CD4-positive, alpha-beta T cell (primary cell): ENCODE measurements at regions of chr13 and their contacts with region 1.

Region 1: GRCh38 chr13:75760131-75761021 is 124.2 kb downstream of the LMO7 start:
- DNase-seq: peak in 6 of 14 experiments; percentile 7 to 56 (median 44)
- ATAC-seq: peak; percentile 73
- H3K4me3 ChIP-seq: peak overlapping the region; percentile 38
- H3K4me3 Mint-ChIP-seq: peak overlapping the region; percentile 91
- H3K27ac ChIP-seq: peak overlapping the region in 1 of 2 donors; percentile 8
- H3K27ac Mint-ChIP-seq: peak overlapping the region; percentile 91
- H3K4me1 ChIP-seq: peaks cover 19% of the 10 kb centered on the region
- H3K4me1 Mint-ChIP-seq: peaks cover 70% of the 10 kb centered on the region
- H3K27me3 ChIP-seq: no peaks in the 10 kb centered on the region
- H3K27me3 Mint-ChIP-seq: no peaks in the 10 kb centered on the region
- CTCF ChIP-seq: peak; percentile 37

Region 2: DNA sequence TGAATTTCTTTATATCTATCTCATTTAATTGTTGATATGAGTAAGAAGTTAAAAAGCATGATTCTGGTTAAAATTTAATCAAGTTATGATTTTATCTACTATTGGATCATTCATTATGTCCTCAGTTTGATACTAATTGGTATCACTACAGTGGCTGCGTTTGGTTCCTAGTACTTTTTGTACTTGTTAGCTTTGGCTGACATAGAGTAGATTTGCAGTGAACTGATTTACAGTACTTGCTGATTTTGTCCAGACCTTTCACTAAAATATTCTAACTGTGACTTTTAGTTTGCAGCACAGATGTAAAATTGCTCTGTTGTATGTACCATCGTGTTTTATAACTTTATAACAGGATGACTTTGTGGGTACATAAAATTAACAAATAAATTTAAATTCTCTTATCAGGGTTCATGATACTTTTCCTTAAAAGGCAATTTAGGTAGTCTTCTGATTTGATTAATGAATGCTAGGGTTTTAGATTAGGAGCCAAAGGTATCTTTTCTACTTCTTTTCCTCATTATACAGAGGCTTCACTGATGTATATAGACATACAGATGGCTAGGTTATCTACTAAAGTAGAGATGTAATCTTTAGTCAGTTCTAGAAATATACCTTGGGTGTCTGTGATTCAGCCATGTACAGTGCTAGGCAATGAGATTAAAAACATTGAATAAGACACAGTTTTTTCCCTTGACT is 202.1 kb before region 1 on chr13:
- CTCF ChIA-PET with region 1: no interaction called
- POLR2A ChIA-PET with region 1: no interaction called
- intact Hi-C with region 1: no loop called
- DNase-seq: no peak
- ATAC-seq: peak; percentile 48
- H3K4me3 ChIP-seq: no peak overlapping the region
- H3K4me3 Mint-ChIP-seq: peak overlapping the region; percentile 23
- H3K27ac ChIP-seq: no peak overlapping the region
- H3K27ac Mint-ChIP-seq: peak overlapping the region; percentile 38
- H3K4me1 ChIP-seq: peaks cover 4% of the 10 kb centered on the region
- H3K4me1 Mint-ChIP-seq: peaks cover 52% of the 10 kb centered on the region
- H3K27me3 ChIP-seq: no peaks in the 10 kb centered on the region
- H3K27me3 Mint-ChIP-seq: no peaks in the 10 kb centered on the region
- CTCF ChIP-seq: no peak

Region 3: DNA sequence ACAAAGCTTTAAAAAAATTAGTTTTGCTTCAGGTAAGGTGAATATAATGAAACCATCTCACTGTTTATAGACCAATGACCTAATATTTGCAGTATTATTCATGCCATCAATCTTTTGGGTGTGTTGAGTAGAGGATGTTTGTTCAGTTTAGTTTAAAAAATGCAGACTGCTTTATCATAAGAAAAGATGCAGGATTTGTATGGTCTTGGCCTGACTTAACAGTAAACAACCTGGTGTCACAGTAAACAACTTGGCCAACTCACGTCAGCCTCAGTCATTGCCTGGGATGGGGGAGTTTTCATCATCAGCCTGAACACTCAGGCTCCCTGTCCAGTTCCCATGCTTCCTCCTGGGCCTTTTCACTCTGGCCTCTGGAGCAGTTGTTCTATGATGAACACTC is 69.2 kb before region 1 on chr13:
- CTCF ChIA-PET with region 1: interaction called, 5 read pairs
- POLR2A ChIA-PET with region 1: interaction called, 19 read pairs
- intact Hi-C with region 1: loop called in 1 of 2 experiments (anchors 5 kb)
- DNase-seq: no peak
- ATAC-seq: no peak
- H3K4me3 ChIP-seq: no peak overlapping the region
- H3K4me3 Mint-ChIP-seq: no peak overlapping the region
- H3K27ac ChIP-seq: no peak overlapping the region
- H3K27ac Mint-ChIP-seq: no peak overlapping the region
- H3K4me1 ChIP-seq: no peaks in the 10 kb centered on the region
- H3K4me1 Mint-ChIP-seq: no peaks in the 10 kb centered on the region
- H3K27me3 ChIP-seq: no peaks in the 10 kb centered on the region
- H3K27me3 Mint-ChIP-seq: no peaks in the 10 kb centered on the region
- CTCF ChIP-seq: no peak

Region 4: DNA sequence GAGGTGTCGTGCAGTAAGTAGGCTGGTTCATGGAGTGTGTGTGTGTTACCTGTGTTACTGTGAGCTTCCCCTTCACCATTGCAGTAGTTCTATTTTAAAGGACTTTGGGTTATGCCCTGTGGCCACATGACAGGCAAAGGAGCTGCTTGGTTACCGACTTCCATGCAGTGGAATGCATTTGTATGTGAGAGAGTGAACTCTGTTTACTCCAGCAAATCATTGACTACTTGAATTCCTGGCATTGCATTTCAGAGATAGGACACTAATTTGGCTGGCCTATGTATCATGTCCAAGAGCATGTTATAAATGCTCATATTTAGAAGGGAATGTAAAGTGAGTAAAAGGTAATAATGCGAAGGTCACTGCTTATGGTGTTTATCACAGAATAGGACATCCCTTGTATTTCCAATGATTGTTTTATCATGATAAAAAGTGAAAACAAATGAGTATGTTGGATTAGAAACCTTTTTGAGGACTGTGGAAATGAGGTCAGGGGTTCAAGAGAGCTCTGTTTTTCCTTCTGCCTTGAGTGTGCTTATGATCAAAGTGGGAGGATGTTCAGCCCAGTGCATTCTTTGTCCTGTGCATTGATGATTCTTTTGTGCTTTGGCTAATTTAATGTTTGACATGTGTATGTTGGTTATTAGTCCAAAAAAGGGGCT is 32.3 kb after region 1 on chr13:
- CTCF ChIA-PET with region 1: interaction called, 3 read pairs
- POLR2A ChIA-PET with region 1: interaction called, 10 read pairs
- intact Hi-C with region 1: loop called in 1 of 2 experiments (anchors 5 kb)
- DNase-seq: no peak
- ATAC-seq: no peak
- H3K4me3 ChIP-seq: no peak overlapping the region
- H3K4me3 Mint-ChIP-seq: no peak overlapping the region
- H3K27ac ChIP-seq: no peak overlapping the region
- H3K27ac Mint-ChIP-seq: no peak overlapping the region
- H3K4me1 ChIP-seq: no peaks in the 10 kb centered on the region
- H3K4me1 Mint-ChIP-seq: peaks cover 6% of the 10 kb centered on the region
- H3K27me3 ChIP-seq: no peaks in the 10 kb centered on the region
- H3K27me3 Mint-ChIP-seq: no peaks in the 10 kb centered on the region
- CTCF ChIP-seq: no peak

Region 5: DNA sequence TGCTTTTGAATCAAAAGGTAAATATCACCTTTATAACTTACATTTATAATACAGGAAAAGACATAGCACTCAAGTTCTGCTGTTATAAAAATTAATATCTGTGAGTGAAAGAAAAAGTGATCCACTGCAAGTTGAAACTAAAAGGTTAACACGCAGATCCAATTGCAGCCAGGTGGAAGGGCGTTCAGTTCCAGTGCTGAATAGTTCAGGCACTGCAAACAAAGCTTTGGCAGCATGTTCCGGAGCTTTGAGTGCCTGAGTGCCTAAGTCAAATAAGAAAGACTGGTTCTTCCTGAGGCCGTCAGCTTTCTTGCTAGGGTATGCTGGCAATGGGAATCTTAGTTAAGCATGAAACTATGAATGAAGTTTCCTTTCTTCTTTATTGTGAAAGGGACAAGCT is 76.1 kb after region 1 on chr13:
- CTCF ChIA-PET with region 1: no interaction called
- POLR2A ChIA-PET with region 1: interaction called, 4 read pairs
- intact Hi-C with region 1: loop called in 1 of 2 experiments (anchors 5 kb)
- DNase-seq: no peak
- ATAC-seq: no peak
- H3K4me3 ChIP-seq: no peak overlapping the region
- H3K4me3 Mint-ChIP-seq: no peak overlapping the region
- H3K27ac ChIP-seq: no peak overlapping the region
- H3K27ac Mint-ChIP-seq: no peak overlapping the region
- H3K4me1 ChIP-seq: no peaks in the 10 kb centered on the region
- H3K4me1 Mint-ChIP-seq: peaks cover 15% of the 10 kb centered on the region
- H3K27me3 ChIP-seq: no peaks in the 10 kb centered on the region
- H3K27me3 Mint-ChIP-seq: no peaks in the 10 kb centered on the region
- CTCF ChIP-seq: no peak

Region 6: DNA sequence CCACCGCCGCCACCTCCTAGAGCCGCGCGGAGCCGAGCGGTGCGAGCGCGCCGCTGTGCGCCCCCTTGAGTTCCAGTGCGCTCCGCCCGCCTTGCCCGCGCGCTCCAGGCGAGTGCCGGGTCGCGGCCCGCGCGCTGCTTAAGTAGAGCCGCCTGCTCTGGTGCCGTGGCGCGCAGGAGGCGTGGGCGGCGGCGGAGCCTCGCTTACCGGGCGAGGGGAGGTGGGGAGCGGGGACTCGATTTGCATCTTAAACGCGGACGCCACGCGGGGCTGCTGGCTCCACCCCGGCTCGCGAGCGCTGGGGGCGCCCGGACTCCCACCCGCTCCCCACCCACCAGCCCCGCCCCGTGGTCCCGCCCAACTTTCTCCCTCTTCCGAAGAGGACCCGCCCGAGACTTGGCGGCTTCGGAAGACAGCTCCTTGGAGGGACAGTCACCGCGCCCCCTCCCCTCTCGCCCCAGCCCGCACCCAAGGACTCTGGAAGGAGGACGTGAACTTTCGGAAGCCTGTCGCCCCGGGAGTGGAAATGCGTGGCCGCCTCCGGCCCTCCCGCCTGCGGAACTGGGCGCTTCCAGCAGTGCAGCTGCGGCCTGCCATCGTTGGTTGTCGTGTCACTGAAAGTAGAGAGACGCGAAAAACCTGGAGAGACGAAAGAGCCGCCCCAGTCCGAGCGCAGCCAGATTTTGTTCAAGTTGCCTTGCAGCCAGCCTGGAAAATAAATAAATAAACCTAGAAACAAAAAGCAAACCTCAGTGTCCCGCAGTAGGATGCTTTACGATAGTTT is 1126.1 kb after region 1 on chr13 and contains the start of gene KCTD12:
- CTCF ChIA-PET with region 1: no interaction called
- POLR2A ChIA-PET with region 1: interaction called, 21 read pairs
- intact Hi-C with region 1: no loop called
- DNase-seq: peak; percentile 54 to 91 (median 72)
- ATAC-seq: peak; percentile 76
- H3K4me3 ChIP-seq: peak within 1 kb of the TSS; percentile 85
- H3K4me3 Mint-ChIP-seq: peak within 1 kb of the TSS; percentile 91
- H3K27ac ChIP-seq: peak within 1 kb of the TSS in 1 of 2 donors; percentile 24
- H3K27ac Mint-ChIP-seq: peak within 1 kb of the TSS; percentile 82
- H3K4me1 ChIP-seq: peaks cover 28% of the 10 kb centered on the region
- H3K4me1 Mint-ChIP-seq: peaks cover 38% of the 10 kb centered on the region
- H3K27me3 ChIP-seq: peaks cover 0 to 3% of the 10 kb centered on the region in 2 experiments
- H3K27me3 Mint-ChIP-seq: peaks cover 7% of the 10 kb centered on the region
- CTCF ChIP-seq: no peak
- total RNA-seq, gene KCTD12: 4.8 to 4.9 TPM